Right cardiac atrium (tissue), 5 donors: ENCODE measurements at regions of chr19 and their contacts with region 1.

Region 1: GRCh38 chr19:17450264-17451075 is 2.0 kb upstream of the TMEM221 start:
- DNase-seq: no peak
- ATAC-seq: no peak
- H3K4me3 ChIP-seq: no peak overlapping the region
- H3K27ac ChIP-seq: no peak overlapping the region
- H3K4me1 ChIP-seq: no peaks in the 10 kb centered on the region
- H3K27me3 ChIP-seq: no peaks in the 10 kb centered on the region

Region 2: GRCh38 chr19:17260842-17261325 is 189.6 kb before region 1 on chr19:
- intact Hi-C with region 1: no loop called
- DNase-seq: peak; percentile 80 to 91 (median 89)
- ATAC-seq: peak; percentile 74 to 81
- H3K4me3 ChIP-seq: no peak overlapping the region
- H3K27ac ChIP-seq: no peak overlapping the region
- H3K4me1 ChIP-seq: no peaks in the 10 kb centered on the region
- H3K27me3 ChIP-seq: no peaks in the 10 kb centered on the region

Region 3: DNA sequence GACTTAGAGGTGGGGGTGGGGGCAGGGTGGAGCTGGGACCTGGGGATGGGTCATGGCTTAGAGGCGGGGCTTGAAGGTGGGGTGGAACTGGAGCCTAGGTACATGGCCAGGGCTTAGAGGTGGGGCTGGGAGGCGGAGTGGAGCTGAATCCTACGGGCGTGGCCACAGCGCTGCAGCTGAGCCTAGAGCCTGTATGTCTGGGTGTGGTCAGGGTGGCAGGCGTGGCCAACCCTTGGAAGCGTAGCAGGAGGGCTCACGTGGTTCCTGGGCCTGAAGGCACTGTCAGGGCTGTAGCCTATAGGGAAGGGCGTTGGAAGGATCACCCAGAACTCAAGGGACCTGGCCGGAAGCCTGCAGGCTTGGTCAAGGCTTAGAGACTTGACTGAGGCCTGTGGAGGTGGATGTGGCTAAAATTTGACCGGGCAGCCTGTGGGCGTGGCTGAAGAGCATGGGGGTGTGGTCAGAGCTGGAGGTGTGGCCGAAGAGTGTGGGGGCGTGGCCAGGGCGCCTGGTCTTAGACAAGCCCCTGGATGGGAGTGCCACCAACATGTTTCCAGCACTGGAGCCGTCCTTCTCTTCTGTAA is 129.3 kb after region 1 on chr19:
- intact Hi-C with region 1: loop called in 1 of 4 experiments (anchors 10 kb)
- DNase-seq: peak; percentile 70 to 87 (median 80)
- ATAC-seq: peak; percentile 69 to 83
- H3K4me3 ChIP-seq: no peak overlapping the region
- H3K27ac ChIP-seq: no peak overlapping the region
- H3K4me1 ChIP-seq: no peaks in the 10 kb centered on the region
- H3K27me3 ChIP-seq: no peaks in the 10 kb centered on the region

Region 4: GRCh38 chr19:17605761-17606745 is 155.6 kb after region 1 on chr19:
- intact Hi-C with region 1: loop called in 1 of 4 experiments (anchors 5 kb)
- DNase-seq: peak; percentile 77 to 90 (median 87)
- ATAC-seq: peak; percentile 70 to 83
- H3K4me3 ChIP-seq: peak overlapping the region; percentile 0
- H3K27ac ChIP-seq: no peak overlapping the region
- H3K4me1 ChIP-seq: no peaks in the 10 kb centered on the region
- H3K27me3 ChIP-seq: no peaks in the 10 kb centered on the region